GM13976 (cell line): ENCODE measurements at regions of chr17 and their contacts with region 1.

Region 1: GRCh38 chr17:76304226-76305134 is 3.6 kb downstream of the QRICH2 start:
- DNase-seq: no peak
- CTCF ChIP-seq: no peak

Region 2: DNA sequence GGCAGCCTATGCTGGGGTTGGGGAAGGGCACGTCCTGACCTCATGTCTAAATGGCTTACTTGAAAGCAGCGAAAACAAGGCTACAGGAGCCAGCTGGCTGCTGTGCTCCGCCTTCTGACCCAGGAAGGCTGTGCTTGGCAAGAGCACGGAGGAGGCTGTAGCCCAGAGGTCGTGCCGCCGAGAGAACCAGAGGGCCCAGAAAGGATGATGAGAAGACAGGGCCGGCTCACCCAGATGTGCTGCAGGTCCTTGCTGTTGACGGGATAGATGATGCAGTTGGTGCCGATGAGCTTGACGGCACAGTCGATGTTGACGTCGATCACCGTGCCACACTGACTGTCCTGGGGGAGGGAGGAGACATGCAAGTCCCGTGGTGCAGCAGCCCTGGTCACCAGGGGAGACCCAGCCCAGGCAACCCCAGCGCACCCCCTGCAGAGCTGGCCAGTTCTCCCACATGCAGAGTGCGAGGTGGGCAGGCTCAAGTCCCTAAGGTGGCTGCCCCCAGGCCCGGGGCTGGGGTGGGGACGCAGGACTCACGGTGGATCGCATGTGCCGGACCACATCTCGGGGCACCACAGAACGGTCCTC is 100.6 kb after region 1 on chr17:
- in situ Hi-C with region 1: loop called (anchors 5 kb)
- DNase-seq: no peak
- CTCF ChIP-seq: no peak